ENCODE measurements at regions of chr12 and their contacts with region 1.

Region 1: GRCh38 chr12:56224102-56224701 is at the start of gene NABP2:
- DNase-seq: peak; percentile 98
- ATAC-seq: peak; percentile 83
- H3K4me3 Mint-ChIP-seq: peak within 1 kb of the TSS; percentile 98
- H3K27ac Mint-ChIP-seq: peak within 1 kb of the TSS; percentile 88
- H3K4me1 Mint-ChIP-seq: peaks cover 37% of the 10 kb centered on the region
- H3K27me3 Mint-ChIP-seq: no peaks in the 10 kb centered on the region
- total RNA-seq, gene NABP2: 69.1 to 76.0 TPM

Region 2: GRCh38 chr12:55973598-55974307 is 250.4 kb before region 1 on chr12 and contains the start of gene RAB5B:
- CTCF ChIA-PET with region 1: interaction called, 4 read pairs
- POLR2A ChIA-PET with region 1: no interaction called
- intact Hi-C with region 1: loop called in 1 of 2 experiments (anchors 5 kb)
- DNase-seq: peak; percentile 98
- ATAC-seq: peak; percentile 93
- H3K4me3 Mint-ChIP-seq: no peak within 1 kb of the TSS
- H3K27ac Mint-ChIP-seq: no peak within 1 kb of the TSS
- H3K4me1 Mint-ChIP-seq: peaks cover 28% of the 10 kb centered on the region
- H3K27me3 Mint-ChIP-seq: no peaks in the 10 kb centered on the region
- total RNA-seq, gene RAB5B: 33.2 to 35.1 TPM

Region 3: GRCh38 chr12:56152318-56153033 is 71.7 kb before region 1 on chr12 and contains the start of gene MYL6B:
- CTCF ChIA-PET with region 1: no interaction called
- POLR2A ChIA-PET with region 1: no interaction called
- intact Hi-C with region 1: loop called in 1 of 2 experiments (anchors 1 kb)
- DNase-seq: peak; percentile 98
- ATAC-seq: peak; percentile 92
- H3K4me3 Mint-ChIP-seq: peak within 1 kb of the TSS; percentile 88
- H3K27ac Mint-ChIP-seq: peak within 1 kb of the TSS; percentile 99
- H3K4me1 Mint-ChIP-seq: peaks cover 29% of the 10 kb centered on the region
- H3K27me3 Mint-ChIP-seq: no peaks in the 10 kb centered on the region
- total RNA-seq, gene MYL6B: 76.3 to 79.3 TPM

Region 4: GRCh38 chr12:56258057-56258819 is 34.0 kb after region 1 on chr12 and contains the start of gene ANKRD52:
- CTCF ChIA-PET with region 1: interaction called, 26 read pairs
- POLR2A ChIA-PET with region 1: interaction called, 4 read pairs
- intact Hi-C with region 1: loop called (anchors 1 to 2 kb)
- DNase-seq: peak; percentile 90
- ATAC-seq: peak; percentile 92
- H3K4me3 Mint-ChIP-seq: peak within 1 kb of the TSS; percentile 83
- H3K27ac Mint-ChIP-seq: peak within 1 kb of the TSS; percentile 72
- H3K4me1 Mint-ChIP-seq: peaks cover 16% of the 10 kb centered on the region
- H3K27me3 Mint-ChIP-seq: no peaks in the 10 kb centered on the region
- total RNA-seq, gene ANKRD52: 29.2 to 31.0 TPM

Region 5: DNA sequence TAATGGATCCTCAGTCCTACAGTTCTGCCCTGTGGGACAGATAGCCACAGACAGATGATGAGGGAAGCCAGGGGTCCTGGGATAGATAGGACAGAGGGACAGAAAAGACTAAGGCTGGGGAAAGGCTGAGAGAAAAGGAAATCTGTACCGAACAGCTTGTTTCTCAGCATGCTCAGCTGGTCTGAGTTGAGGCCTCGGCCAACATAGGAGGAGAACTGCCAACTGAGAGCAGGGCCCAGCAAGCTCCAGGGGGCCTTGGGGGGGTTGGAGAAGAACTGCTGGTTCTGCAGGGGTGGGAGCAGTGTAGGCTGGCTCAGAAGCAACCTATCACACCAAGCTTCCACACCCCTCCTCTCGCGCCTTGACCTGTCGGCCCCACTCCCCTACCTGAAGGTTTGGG is 124.6 kb after region 1 on chr12:
- CTCF ChIA-PET with region 1: no interaction called
- POLR2A ChIA-PET with region 1: no interaction called
- intact Hi-C with region 1: no loop called
- DNase-seq: no peak
- ATAC-seq: no peak
- H3K4me3 Mint-ChIP-seq: no peak overlapping the region
- H3K27ac Mint-ChIP-seq: peak overlapping the region; percentile 14
- H3K4me1 Mint-ChIP-seq: peaks cover 3% of the 10 kb centered on the region
- H3K27me3 Mint-ChIP-seq: no peaks in the 10 kb centered on the region

Region 6: GRCh38 chr12:56359851-56360767 is 135.9 kb after region 1 on chr12 and contains the start of gene STAT2:
- CTCF ChIA-PET with region 1: interaction called, 4 read pairs
- POLR2A ChIA-PET with region 1: interaction called, 6 read pairs
- intact Hi-C with region 1: loop called in 1 of 2 experiments (anchors 1 kb)
- DNase-seq: peak; percentile 99
- ATAC-seq: peak; percentile 97
- H3K4me3 Mint-ChIP-seq: peak within 1 kb of the TSS; percentile 86
- H3K27ac Mint-ChIP-seq: peak within 1 kb of the TSS; percentile 95
- H3K4me1 Mint-ChIP-seq: peaks cover 23% of the 10 kb centered on the region
- H3K27me3 Mint-ChIP-seq: no peaks in the 10 kb centered on the region
- total RNA-seq, gene STAT2: 116 to 124 TPM